SK-N-SH (cell line): ENCODE measurements at regions of chr4 and their contacts with region 1.

Region 1: GRCh38 chr4:21790438-21791029 is 158.0 kb downstream of the KCNIP4 start:
- DNase-seq: peak; percentile 3
- H3K4me3 ChIP-seq: peak overlapping the region in 1 of 2 experiments; percentile 21; a peak in 1 of 4 replicates
- H3K27ac ChIP-seq: peak overlapping the region in 1 of 2 experiments; percentile 21; a peak in 1 of 4 replicates
- H3K4me1 ChIP-seq: no peaks in the 10 kb centered on the region
- H3K27me3 ChIP-seq: no peaks in the 10 kb centered on the region
- CTCF ChIP-seq: peak; percentile 73
- EP300 ChIP-seq: no peak
- RAD21 ChIP-seq: peak; percentile 72

Region 2: GRCh38 chr4:21677173-21677572 is 113.4 kb before region 1 on chr4:
- CTCF ChIA-PET with region 1: no interaction called
- POLR2A ChIA-PET with region 1: no interaction called
- DNase-seq: no peak
- H3K4me3 ChIP-seq: no peak overlapping the region
- H3K27ac ChIP-seq: no peak overlapping the region
- H3K4me1 ChIP-seq: peaks cover 0 to 4% of the 10 kb centered on the region in 2 experiments; a peak in 1 of 4 replicates
- H3K27me3 ChIP-seq: no peaks in the 10 kb centered on the region
- CTCF ChIP-seq: no peak
- EP300 ChIP-seq: no peak
- RAD21 ChIP-seq: no peak

Region 3: DNA sequence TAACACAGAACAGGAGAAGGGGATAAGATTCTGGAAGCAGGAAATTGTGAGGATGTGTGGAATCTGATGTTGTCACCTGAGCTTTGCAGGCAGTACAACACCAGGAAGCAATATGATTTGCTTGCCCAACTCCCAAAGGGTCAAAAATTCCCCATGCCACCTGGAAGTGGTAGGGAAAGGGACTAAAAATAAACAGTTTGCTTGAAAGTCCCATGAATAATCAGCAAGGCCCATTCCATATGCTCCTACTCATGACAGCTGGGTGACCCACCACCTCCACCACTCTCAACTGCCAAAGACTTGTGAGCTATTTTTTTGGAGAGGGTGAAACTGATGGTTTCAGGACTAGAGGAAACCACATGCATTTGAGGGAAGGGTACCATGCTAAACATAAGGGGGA is 10.4 kb before region 1 on chr4:
- CTCF ChIA-PET with region 1: interaction called, 35 read pairs
- POLR2A ChIA-PET with region 1: no interaction called
- DNase-seq: no peak
- H3K4me3 ChIP-seq: no peak overlapping the region
- H3K27ac ChIP-seq: no peak overlapping the region
- H3K4me1 ChIP-seq: no peaks in the 10 kb centered on the region
- H3K27me3 ChIP-seq: no peaks in the 10 kb centered on the region; the same call in 1 of the 2 replicates
- CTCF ChIP-seq: no peak
- EP300 ChIP-seq: no peak
- RAD21 ChIP-seq: no peak

Region 4: GRCh38 chr4:21815651-21816377 is 25.3 kb after region 1 on chr4:
- CTCF ChIA-PET with region 1: interaction called, 11 read pairs
- POLR2A ChIA-PET with region 1: no interaction called
- DNase-seq: no peak
- H3K4me3 ChIP-seq: no peak overlapping the region
- H3K27ac ChIP-seq: no peak overlapping the region
- H3K4me1 ChIP-seq: no peaks in the 10 kb centered on the region; a peak in 1 of 4 replicates
- H3K27me3 ChIP-seq: no peaks in the 10 kb centered on the region
- CTCF ChIP-seq: no peak
- EP300 ChIP-seq: no peak
- RAD21 ChIP-seq: no peak

Region 5: GRCh38 chr4:22014222-22014741 is 223.7 kb after region 1 on chr4:
- CTCF ChIA-PET with region 1: no interaction called
- POLR2A ChIA-PET with region 1: no interaction called
- DNase-seq: no peak
- H3K4me3 ChIP-seq: no peak overlapping the region
- H3K27ac ChIP-seq: peak overlapping the region in 1 of 2 experiments; percentile 36; a peak in 1 of 4 replicates
- H3K4me1 ChIP-seq: no peaks in the 10 kb centered on the region
- H3K27me3 ChIP-seq: no peaks in the 10 kb centered on the region
- CTCF ChIP-seq: no peak
- EP300 ChIP-seq: no peak
- RAD21 ChIP-seq: no peak

Region 6: GRCh38 chr4:22264261-22264660 is 473.7 kb after region 1 on chr4:
- CTCF ChIA-PET with region 1: no interaction called
- POLR2A ChIA-PET with region 1: no interaction called
- DNase-seq: no peak
- H3K4me3 ChIP-seq: no peak overlapping the region
- H3K27ac ChIP-seq: no peak overlapping the region
- H3K4me1 ChIP-seq: no peaks in the 10 kb centered on the region
- H3K27me3 ChIP-seq: no peaks in the 10 kb centered on the region; the same call in 1 of the 2 replicates
- CTCF ChIP-seq: no peak
- EP300 ChIP-seq: no peak
- RAD21 ChIP-seq: no peak

Region 7: GRCh38 chr4:22356987-22357596 is 566.6 kb after region 1 on chr4:
- CTCF ChIA-PET with region 1: interaction called, 11 read pairs
- POLR2A ChIA-PET with region 1: no interaction called
- DNase-seq: no peak
- H3K4me3 ChIP-seq: no peak overlapping the region
- H3K27ac ChIP-seq: no peak overlapping the region
- H3K4me1 ChIP-seq: no peaks in the 10 kb centered on the region
- H3K27me3 ChIP-seq: no peaks in the 10 kb centered on the region
- CTCF ChIP-seq: peak; percentile 60
- EP300 ChIP-seq: no peak
- RAD21 ChIP-seq: peak; percentile 60

Region 8: GRCh38 chr4:22389240-22389870 is 598.8 kb after region 1 on chr4:
- CTCF ChIA-PET with region 1: interaction called, 177 read pairs
- POLR2A ChIA-PET with region 1: no interaction called
- DNase-seq: peak; percentile 35
- H3K4me3 ChIP-seq: no peak overlapping the region; a peak in 1 of 4 replicates
- H3K27ac ChIP-seq: no peak overlapping the region
- H3K4me1 ChIP-seq: no peaks in the 10 kb centered on the region
- H3K27me3 ChIP-seq: no peaks in the 10 kb centered on the region
- CTCF ChIP-seq: peak; percentile 95
- EP300 ChIP-seq: no peak
- RAD21 ChIP-seq: peak; percentile 88

Region 9: DNA sequence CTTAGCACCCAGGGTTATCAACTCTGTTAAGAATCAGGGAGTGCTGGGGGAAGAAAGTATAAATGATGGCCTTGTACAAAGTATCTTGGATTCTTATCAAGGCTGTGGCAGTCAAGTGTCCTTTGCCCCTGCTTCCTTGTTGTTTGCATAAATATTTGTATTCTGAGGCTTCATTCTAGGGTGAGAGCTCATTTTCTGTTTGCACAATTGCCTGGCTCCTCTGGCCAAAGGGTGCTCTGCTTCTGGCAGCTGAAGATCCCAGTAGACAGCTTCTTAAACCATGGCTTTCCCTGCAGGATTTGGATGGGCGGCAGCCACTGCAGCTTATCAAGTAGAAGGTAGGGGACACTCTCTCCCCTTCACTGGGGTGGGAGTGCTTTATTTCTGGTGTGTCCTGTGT is 902.2 kb after region 1 on chr4 and contains the start of gene GBA3:
- CTCF ChIA-PET with region 1: interaction called, 38 read pairs
- POLR2A ChIA-PET with region 1: no interaction called
- DNase-seq: no peak
- H3K4me3 ChIP-seq: no peak within 1 kb of the TSS
- H3K27ac ChIP-seq: no peak within 1 kb of the TSS
- H3K4me1 ChIP-seq: no peaks in the 10 kb centered on the region
- H3K27me3 ChIP-seq: peaks cover 21% of the 10 kb centered on the region; the same call in 1 of the 2 replicates
- CTCF ChIP-seq: no peak
- EP300 ChIP-seq: no peak
- RAD21 ChIP-seq: no peak
- polyA plus RNA-seq, gene GBA3: not detected in 2 replicates